SK-N-SH (cell line): ENCODE measurements at regions of chr19 and their contacts with region 1.

Region 1: GRCh38 chr19:2820112-2820702 is 539 bp downstream of the ZNF554 start:
- DNase-seq: peak; percentile 70
- H3K4me3 ChIP-seq: peak overlapping the region; percentile 72 to 79
- H3K27ac ChIP-seq: peak overlapping the region in 1 of 2 experiments; percentile 17; a peak in 1 of 4 replicates
- H3K4me1 ChIP-seq: peaks cover 0 to 3% of the 10 kb centered on the region in 2 experiments; a peak in 1 of 4 replicates
- H3K27me3 ChIP-seq: no peaks in the 10 kb centered on the region
- CTCF ChIP-seq: no peak
- EP300 ChIP-seq: no peak
- RAD21 ChIP-seq: no peak

Region 2: GRCh38 chr19:2770055-2771013 is 49.9 kb before region 1 on chr19:
- CTCF ChIA-PET with region 1: no interaction called
- POLR2A ChIA-PET with region 1: no interaction called
- DNase-seq: no peak
- H3K4me3 ChIP-seq: no peak overlapping the region
- H3K27ac ChIP-seq: no peak overlapping the region
- H3K4me1 ChIP-seq: no peaks in the 10 kb centered on the region
- H3K27me3 ChIP-seq: no peaks in the 10 kb centered on the region
- CTCF ChIP-seq: no peak
- EP300 ChIP-seq: no peak
- RAD21 ChIP-seq: no peak

Region 3: GRCh38 chr19:2782936-2783780 is 37.0 kb before region 1 on chr19 and contains the start of gene SGTA:
- CTCF ChIA-PET with region 1: interaction called, 13 read pairs
- POLR2A ChIA-PET with region 1: interaction called, 3 read pairs
- DNase-seq: peak; percentile 99
- H3K4me3 ChIP-seq: peak within 1 kb of the TSS; percentile 93 to 99
- H3K27ac ChIP-seq: peak within 1 kb of the TSS; percentile 69 to 85
- H3K4me1 ChIP-seq: peaks cover 4 to 25% of the 10 kb centered on the region in 2 experiments; a peak in 2 of 4 replicates
- H3K27me3 ChIP-seq: no peaks in the 10 kb centered on the region
- CTCF ChIP-seq: peak; percentile 38
- EP300 ChIP-seq: no peak
- RAD21 ChIP-seq: no peak
- polyA plus RNA-seq, gene SGTA: 60.4 and 78.4 TPM in 2 replicates

Region 4: DNA sequence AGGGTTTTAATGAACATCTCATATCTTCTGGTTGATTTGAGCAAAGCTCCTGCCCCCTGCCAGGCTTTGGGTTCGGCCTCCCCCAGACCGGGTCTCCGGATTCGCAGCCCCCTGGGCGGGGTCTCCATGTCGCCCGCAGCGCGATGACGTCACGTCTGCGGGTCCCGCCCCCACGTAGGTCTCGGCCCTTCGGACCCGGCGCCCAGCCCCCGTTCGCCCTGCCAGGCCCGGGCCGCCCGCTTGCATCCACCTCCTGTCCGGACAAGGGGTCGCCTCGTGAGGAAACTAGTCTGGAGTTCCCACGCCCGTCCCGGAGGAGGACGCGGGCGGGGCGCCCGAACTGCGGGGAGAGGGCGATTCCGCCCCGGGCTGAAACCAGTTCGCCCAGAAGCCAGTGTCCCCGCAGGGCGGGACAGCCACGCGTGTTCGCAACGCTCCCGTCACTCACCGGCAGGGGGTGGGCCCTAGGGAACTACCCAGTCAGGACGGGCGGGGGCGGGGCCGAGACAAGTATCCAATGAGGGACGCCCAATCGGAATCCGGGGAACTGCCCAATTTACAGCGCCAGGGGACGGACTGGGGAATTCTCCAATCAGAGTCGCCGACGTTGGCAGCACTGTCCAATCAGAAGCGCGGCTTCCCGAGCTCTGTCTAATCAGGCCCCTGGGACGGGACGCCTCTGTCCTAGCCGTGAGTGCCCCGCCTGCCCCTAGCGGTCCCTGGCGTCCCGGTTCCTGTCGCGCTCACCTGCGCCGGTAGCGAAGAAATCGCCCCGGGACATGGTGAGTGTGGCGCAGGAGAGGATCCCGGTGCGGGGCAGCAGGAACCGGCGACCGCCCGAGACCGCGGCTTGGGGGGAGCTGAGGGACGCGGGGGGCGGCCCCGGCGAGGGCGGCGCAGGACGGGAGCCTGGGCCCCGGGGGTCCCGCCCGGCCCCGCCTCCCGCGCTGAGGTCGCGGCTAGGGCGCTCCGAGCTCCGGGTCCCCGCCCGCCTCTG is 20.9 kb after region 1 on chr19 and contains the start of gene ZNF555:
- CTCF ChIA-PET with region 1: interaction called, 13 read pairs
- POLR2A ChIA-PET with region 1: no interaction called
- DNase-seq: peak; percentile 98
- H3K4me3 ChIP-seq: peak within 1 kb of the TSS; percentile 66 to 84
- H3K27ac ChIP-seq: peak within 1 kb of the TSS; percentile 81 to 87
- H3K4me1 ChIP-seq: peaks cover 0 to 5% of the 10 kb centered on the region in 2 experiments; a peak in 1 of 4 replicates
- H3K27me3 ChIP-seq: no peaks in the 10 kb centered on the region
- CTCF ChIP-seq: peak; percentile 40
- EP300 ChIP-seq: no peak
- RAD21 ChIP-seq: no peak
- polyA plus RNA-seq, gene ZNF555: 1.4 and 2.2 TPM in 2 replicates

Region 5: DNA sequence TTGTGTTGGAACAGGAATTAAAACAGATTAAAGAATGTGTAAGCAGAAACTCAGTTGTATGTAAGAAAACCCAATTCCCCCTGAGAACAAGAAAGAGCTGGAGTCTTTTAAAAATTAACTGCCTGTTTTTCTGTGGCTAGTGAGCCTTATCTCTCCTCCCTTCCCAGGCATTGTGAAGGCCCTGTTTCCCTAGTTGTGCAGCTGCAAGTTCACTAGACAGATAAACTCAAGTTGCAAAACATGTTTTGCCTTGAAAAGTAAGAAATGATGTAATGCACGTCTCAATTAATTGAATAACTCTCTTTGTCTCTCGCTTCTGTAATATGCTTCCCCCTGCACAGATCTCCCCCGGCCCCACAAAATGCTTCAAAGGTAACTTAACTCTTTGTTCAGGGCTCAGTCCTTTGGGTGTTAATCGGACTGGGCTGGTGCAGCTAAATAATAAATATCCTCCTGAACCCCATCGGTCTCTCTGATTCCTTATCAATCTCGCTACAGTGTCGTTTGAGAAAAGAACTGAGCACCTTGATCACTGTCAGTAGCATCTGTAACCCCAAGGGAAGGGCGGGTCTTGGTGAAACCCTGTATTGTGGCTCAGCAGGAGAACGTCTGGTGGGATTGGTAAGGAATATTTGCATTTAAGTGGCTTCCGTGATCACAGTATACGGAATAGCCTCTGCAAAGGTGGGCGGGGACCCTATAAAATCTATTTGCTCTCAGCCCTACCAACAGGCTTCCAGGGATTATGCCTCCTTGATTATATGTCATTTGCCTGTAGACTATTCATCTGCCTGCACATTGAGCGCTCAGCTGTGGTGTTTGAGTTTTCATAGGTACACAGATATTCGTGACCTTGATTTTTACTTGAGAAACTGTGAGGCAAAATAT is 45.4 kb after region 1 on chr19:
- CTCF ChIA-PET with region 1: no interaction called
- POLR2A ChIA-PET with region 1: no interaction called
- DNase-seq: no peak
- H3K4me3 ChIP-seq: no peak overlapping the region
- H3K27ac ChIP-seq: no peak overlapping the region
- H3K4me1 ChIP-seq: no peaks in the 10 kb centered on the region; a peak in 1 of 4 replicates
- H3K27me3 ChIP-seq: no peaks in the 10 kb centered on the region
- CTCF ChIP-seq: no peak
- EP300 ChIP-seq: no peak
- RAD21 ChIP-seq: no peak